Activated CD4-positive, alpha-beta T cell treated with anti-CD3 and anti-CD28 coated beads for 36 hours (primary cell): ENCODE measurements at regions of chr11 and their contacts with region 1.

Region 1: DNA sequence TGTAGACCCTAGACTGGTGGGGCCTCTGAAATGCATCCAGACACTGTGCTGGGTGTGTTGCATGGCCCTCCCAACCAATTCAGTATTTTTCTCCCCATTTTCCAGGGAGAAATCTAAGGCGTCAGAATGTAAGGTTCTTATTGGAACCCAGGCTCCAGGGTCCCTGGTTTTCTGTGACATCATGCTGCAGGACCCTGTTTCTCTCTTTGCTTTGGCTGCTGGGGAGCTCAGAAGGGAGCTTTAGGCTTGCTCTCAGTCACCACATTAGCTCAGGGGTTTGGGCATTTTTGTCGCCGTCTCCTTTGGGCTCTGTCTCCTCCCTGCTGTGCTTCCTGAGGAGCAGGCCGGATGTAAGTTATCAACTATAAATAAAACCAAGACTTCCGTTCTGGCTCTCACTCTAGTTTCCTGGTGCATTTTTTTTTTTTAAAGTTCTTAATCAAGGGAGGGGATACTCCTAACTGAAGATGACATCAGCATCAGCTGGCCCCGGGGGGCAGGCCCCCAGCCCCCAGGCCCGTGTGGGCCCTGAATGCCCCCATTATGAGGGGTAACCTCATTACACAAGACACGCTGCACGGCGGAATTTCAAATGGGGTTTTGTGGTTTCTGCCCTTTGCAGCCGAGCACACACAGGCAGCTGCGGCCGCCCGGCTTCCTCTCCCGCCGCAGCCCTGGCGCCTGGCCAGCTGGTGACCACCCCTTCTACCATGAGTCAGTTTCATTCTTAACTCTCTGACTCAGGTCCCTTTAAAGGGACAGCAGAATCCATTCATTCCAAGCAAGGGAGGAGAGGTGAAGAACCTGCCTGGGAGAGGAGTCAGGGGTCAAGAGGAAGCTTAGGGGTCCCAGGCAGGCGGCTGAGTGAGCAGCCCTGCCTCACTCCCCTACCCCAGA is 3.2 kb downstream of the MYEOV start:
- DNase-seq: peak; percentile 91
- ATAC-seq: peak; percentile 67
- H3K4me3 Mint-ChIP-seq: peak overlapping the region; percentile 32
- H3K27ac Mint-ChIP-seq: peak overlapping the region; percentile 37
- H3K4me1 Mint-ChIP-seq: peaks cover 50% of the 10 kb centered on the region
- H3K27me3 Mint-ChIP-seq: peaks cover 2% of the 10 kb centered on the region

Region 2: GRCh38 chr11:69122642-69123431 is 174.3 kb before region 1 on chr11:
- CTCF ChIA-PET with region 1: no interaction called
- POLR2A ChIA-PET with region 1: no interaction called
- intact Hi-C with region 1: loop called in 1 of 2 experiments (anchors 2 kb)
- DNase-seq: peak; percentile 91
- ATAC-seq: peak; percentile 91
- H3K4me3 Mint-ChIP-seq: peak overlapping the region; percentile 12
- H3K27ac Mint-ChIP-seq: peak overlapping the region; percentile 19
- H3K4me1 Mint-ChIP-seq: peaks cover 41% of the 10 kb centered on the region
- H3K27me3 Mint-ChIP-seq: no peaks in the 10 kb centered on the region

Region 3: GRCh38 chr11:69238573-69239351 is 58.4 kb before region 1 on chr11:
- CTCF ChIA-PET with region 1: interaction called, 3 read pairs
- POLR2A ChIA-PET with region 1: no interaction called
- intact Hi-C with region 1: loop called in 1 of 2 experiments (anchors 1 kb)
- DNase-seq: peak; percentile 32
- ATAC-seq: peak; percentile 82
- H3K4me3 Mint-ChIP-seq: peak overlapping the region; percentile 12
- H3K27ac Mint-ChIP-seq: peak overlapping the region; percentile 68
- H3K4me1 Mint-ChIP-seq: peaks cover 40% of the 10 kb centered on the region
- H3K27me3 Mint-ChIP-seq: peaks cover 3% of the 10 kb centered on the region

Region 4: DNA sequence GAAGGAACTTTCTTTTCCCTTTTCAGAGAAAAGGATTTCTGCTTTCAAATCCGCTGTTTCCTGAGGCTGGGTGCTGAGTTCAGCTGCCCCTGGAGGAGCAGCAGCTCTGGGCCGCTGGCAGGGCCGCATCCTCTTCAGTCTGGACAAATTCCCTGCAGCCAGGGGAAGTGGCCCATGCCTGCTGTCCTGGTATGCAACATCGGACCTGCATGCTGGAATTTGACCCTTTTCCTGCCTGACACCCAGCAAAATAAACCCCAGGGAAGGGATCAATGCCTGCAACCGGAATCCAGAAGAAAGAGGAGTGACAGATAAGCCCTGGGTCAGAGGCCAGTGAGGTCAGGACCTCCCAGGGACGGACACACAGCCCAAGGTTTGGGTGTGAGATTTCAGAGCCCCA is 130.2 kb after region 1 on chr11:
- CTCF ChIA-PET with region 1: no interaction called
- POLR2A ChIA-PET with region 1: no interaction called
- intact Hi-C with region 1: loop called (anchors 5 kb)
- DNase-seq: no peak
- ATAC-seq: no peak
- H3K4me3 Mint-ChIP-seq: no peak overlapping the region
- H3K27ac Mint-ChIP-seq: no peak overlapping the region
- H3K4me1 Mint-ChIP-seq: peaks cover 13% of the 10 kb centered on the region
- H3K27me3 Mint-ChIP-seq: peaks cover 9% of the 10 kb centered on the region

Region 5: DNA sequence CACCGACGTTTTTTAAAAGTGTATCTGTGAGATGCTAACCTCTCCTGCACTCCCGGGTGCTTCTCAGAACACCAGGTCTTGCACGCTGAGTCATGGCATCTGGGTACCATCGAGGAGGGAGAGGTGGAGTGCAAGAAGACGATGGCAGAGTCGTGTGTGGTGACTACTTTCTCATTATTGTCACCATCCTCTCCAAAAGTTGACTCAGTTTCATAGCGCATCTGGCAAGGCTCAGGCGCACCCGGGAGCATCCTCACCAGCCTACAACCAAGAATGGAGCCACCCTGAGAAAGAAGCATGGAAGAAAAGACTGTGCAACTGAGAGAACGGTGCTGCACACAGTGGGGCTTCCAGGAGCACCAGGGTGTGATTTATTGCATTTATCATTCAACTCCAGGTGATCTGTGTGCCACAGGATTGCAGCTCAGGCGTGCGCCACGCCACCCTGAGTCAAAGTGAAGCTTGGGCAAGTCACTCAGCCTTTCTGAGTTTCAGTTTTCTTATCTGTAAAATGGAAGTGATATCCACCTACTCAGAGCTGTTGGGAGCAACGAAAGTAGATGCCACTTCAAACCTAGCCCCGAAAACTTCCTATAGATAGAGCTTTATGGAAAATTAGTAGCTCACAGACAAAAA is 249.7 kb after region 1 on chr11:
- CTCF ChIA-PET with region 1: interaction called, 5 read pairs
- POLR2A ChIA-PET with region 1: no interaction called
- intact Hi-C with region 1: loop called (anchors 1 to 5 kb)
- DNase-seq: peak; percentile 84
- ATAC-seq: peak; percentile 90
- H3K4me3 Mint-ChIP-seq: no peak overlapping the region
- H3K27ac Mint-ChIP-seq: peak overlapping the region; percentile 40
- H3K4me1 Mint-ChIP-seq: peaks cover 27% of the 10 kb centered on the region
- H3K27me3 Mint-ChIP-seq: peaks cover 45% of the 10 kb centered on the region

Region 6: DNA sequence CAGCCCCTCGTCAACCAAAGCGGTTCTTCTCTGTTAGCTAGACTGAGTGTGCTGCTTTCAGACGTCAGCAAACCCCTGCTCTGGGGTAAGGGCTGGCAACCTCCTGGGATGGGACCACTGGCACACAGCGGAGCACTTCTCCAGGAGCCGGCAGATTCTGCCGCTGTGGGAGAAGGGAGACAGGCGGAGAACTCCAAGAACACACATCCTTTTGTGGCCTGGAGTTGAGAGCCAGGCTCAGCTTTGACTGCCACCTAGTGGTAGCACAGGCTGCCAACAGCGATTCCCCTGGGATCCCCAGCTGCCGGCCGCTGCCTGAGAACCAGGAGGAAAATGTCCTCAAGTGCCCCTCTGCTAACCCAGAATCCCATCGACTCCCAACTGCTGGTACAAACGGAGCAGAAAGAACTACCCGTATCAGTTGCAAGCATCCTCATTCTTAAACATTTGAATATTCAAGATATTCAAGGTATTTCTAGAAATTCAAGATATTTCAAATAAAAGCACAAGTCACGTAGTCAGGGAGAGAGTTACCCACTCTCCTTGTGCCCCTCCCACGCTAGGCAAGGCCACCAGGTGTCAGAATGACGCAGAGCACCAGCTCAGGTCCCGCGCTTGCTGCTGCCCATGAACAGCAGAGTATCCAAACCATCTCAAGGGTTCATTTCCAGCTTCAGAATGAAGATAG is 373.2 kb after region 1 on chr11:
- CTCF ChIA-PET with region 1: interaction called, 7 read pairs
- POLR2A ChIA-PET with region 1: no interaction called
- intact Hi-C with region 1: loop called in 1 of 2 experiments (anchors 10 kb)
- DNase-seq: peak; percentile 77
- ATAC-seq: peak; percentile 38
- H3K4me3 Mint-ChIP-seq: no peak overlapping the region
- H3K27ac Mint-ChIP-seq: no peak overlapping the region
- H3K4me1 Mint-ChIP-seq: peaks cover 26% of the 10 kb centered on the region
- H3K27me3 Mint-ChIP-seq: no peaks in the 10 kb centered on the region